ENCODE measurements at regions of chr6 and their contacts with region 1.

Region 1: DNA sequence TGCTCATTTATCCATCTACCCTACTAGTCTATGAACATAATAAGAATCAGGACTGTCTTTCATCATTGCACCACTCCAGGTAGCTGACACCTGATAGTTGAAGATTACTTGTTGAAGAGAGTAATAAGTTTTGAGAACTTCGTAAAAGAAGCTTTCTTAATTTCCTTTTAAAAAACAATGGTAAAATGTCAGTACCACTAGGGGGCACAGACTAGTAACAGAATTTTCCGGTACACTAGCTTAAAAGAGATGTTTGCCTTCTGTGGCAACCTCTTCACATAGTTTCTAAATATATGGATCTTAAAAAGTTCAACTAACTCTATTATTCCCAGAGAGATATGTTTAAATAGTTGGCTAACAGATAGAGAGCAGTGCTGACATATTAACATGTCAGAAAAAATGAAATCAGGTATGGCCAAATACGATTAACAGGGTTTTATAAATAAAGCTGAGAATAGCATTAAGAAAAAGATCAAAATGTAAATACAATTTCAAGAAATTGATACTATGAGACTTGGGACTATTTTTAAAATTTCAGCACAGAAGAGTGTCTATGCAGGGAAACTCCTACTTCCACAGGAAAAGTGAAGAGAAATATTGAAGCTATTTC is 5.4 kb upstream of the KCNQ5 start:
- DNase-seq: no peak
- H3K4me3 ChIP-seq: no peak overlapping the region
- H3K27ac ChIP-seq: no peak overlapping the region
- H3K4me1 ChIP-seq: peaks cover 0 to 2% of the 10 kb centered on the region in 2 donors
- H3K27me3 ChIP-seq: no peaks in the 10 kb centered on the region
- CTCF ChIP-seq: peak; percentile 49 to 66 (median 49)

Region 2: DNA sequence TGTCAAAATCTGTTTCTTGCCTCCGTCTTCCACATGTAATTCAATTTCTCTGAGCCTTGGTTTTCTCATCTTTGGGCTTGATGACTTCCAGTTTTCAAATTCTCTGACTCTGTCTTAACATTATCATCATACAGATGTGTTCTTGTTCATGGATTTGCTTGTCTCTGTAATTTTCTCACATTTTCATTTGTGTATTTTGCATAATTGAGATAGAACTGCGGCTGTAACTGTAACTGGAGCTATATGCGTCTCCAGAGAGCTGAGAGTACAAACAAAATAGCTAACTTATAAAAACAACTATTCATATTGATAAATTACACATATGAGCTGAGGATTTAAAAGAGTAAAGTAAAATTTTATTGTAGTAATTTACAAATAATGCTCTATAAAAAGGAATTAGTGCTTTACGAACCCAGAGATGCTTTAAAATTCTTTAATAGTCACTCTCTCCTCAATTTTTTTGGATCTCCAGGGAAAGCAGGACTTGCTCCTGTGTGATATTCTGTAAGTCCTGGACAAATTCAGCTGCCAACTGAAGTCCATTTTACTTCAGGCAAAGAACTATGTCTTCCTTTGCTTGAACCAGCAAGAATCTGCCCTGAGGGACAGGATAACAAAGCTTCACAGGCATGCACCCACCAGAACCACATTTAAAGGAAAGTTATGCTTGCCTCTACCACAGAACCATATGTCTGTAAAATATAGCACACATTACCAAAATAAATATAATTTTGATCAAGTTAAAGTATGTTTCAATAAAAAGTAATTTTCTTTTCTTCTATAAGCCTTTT is 320.4 kb after region 1 on chr6:
- intact Hi-C with region 1: no loop called
- DNase-seq: no peak
- H3K4me3 ChIP-seq: no peak overlapping the region
- H3K27ac ChIP-seq: no peak overlapping the region
- H3K4me1 ChIP-seq: no peaks in the 10 kb centered on the region
- H3K27me3 ChIP-seq: no peaks in the 10 kb centered on the region
- CTCF ChIP-seq: no peak

Region 3: GRCh38 chr6:73129653-73130443 is 513.3 kb after region 1 on chr6:
- intact Hi-C with region 1: loop called (anchors 1 kb)
- DNase-seq: peak in 1 of 2 donors; percentile 88
- H3K4me3 ChIP-seq: peak overlapping the region in 1 of 2 donors; percentile 26
- H3K27ac ChIP-seq: no peak overlapping the region
- H3K4me1 ChIP-seq: no peaks in the 10 kb centered on the region
- H3K27me3 ChIP-seq: no peaks in the 10 kb centered on the region
- CTCF ChIP-seq: peak; percentile 87 to 99 (median 97)